PC-3 (cell line): ENCODE measurements at regions of chr1 and their contacts with region 1.

Region 1: GRCh38 chr1:229258031-229258756 is 12.7 kb upstream of the RAB4A start:
- DNase-seq: peak; percentile 85
- ATAC-seq: peak; percentile 87
- H3K4me3 ChIP-seq: no peak overlapping the region
- H3K27ac ChIP-seq: no peak overlapping the region
- H3K4me1 ChIP-seq: no peaks in the 10 kb centered on the region
- H3K27me3 ChIP-seq: no peaks in the 10 kb centered on the region
- CTCF ChIP-seq: peak; percentile 95

Region 2: DNA sequence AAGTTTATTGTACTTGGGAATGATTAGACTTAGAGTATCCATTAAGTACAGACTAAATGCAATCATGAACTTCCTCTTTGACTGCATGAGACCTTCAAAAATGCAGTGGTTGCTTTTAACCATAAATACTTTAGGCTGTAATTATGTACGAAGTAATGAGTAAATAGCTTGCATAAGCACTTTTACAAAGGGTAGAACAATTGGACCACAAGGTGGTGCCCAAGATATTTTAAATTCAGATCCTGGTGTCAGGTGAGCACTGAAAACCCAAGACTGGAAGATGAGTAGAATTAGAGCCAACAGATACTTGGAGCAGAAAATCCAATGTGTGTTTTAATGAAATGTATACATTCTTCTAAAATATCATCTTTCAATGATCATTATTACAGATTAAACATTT is 566.3 kb before region 1 on chr1:
- CTCF ChIA-PET with region 1: interaction called, 3 read pairs
- POLR2A ChIA-PET with region 1: no interaction called
- intact Hi-C with region 1: loop called (anchors 1 kb)
- DNase-seq: peak; percentile 86
- ATAC-seq: peak; percentile 89
- H3K4me3 ChIP-seq: no peak overlapping the region
- H3K27ac ChIP-seq: no peak overlapping the region
- H3K4me1 ChIP-seq: no peaks in the 10 kb centered on the region
- H3K27me3 ChIP-seq: no peaks in the 10 kb centered on the region
- CTCF ChIP-seq: peak; percentile 88

Region 3: GRCh38 chr1:229341774-229342655 is 83.8 kb after region 1 on chr1:
- CTCF ChIA-PET with region 1: no interaction called
- POLR2A ChIA-PET with region 1: no interaction called
- intact Hi-C with region 1: loop called (anchors 1 kb)
- DNase-seq: peak; percentile 83
- ATAC-seq: peak; percentile 78
- H3K4me3 ChIP-seq: peak overlapping the region; percentile 96
- H3K27ac ChIP-seq: no peak overlapping the region
- H3K4me1 ChIP-seq: peaks cover 23% of the 10 kb centered on the region
- H3K27me3 ChIP-seq: no peaks in the 10 kb centered on the region
- CTCF ChIP-seq: no peak

Region 4: DNA sequence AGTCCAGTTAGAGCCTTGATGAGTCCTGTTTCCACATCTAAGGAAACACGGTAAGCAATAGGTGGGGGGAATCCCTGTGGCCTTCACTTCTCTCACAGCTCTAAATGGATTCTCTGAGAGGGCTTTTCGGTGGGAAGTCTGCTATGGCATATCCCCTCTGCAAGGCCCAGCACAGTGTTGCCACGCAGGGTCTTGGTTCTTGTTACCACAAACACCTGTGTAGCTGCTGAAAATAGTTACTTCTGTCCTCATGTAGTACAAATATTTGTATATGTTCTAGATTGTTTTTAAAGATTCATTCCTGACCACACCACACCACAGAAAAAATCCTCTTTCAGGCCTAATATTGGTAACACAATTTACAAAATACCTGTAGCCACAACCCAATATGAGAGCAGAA is 170.1 kb after region 1 on chr1:
- CTCF ChIA-PET with region 1: no interaction called
- POLR2A ChIA-PET with region 1: no interaction called
- intact Hi-C with region 1: no loop called
- DNase-seq: no peak
- ATAC-seq: no peak
- H3K4me3 ChIP-seq: no peak overlapping the region
- H3K27ac ChIP-seq: no peak overlapping the region
- H3K4me1 ChIP-seq: no peaks in the 10 kb centered on the region
- H3K27me3 ChIP-seq: peaks cover 22% of the 10 kb centered on the region
- CTCF ChIP-seq: no peak

Region 5: GRCh38 chr1:229482511-229482910 is 224.3 kb after region 1 on chr1:
- CTCF ChIA-PET with region 1: interaction called, 4 read pairs
- POLR2A ChIA-PET with region 1: no interaction called
- intact Hi-C with region 1: loop called (anchors 1 kb)
- DNase-seq: no peak
- ATAC-seq: 0 out of 2 replicates have a peak, but pooled peaks have one; percentile 11
- H3K4me3 ChIP-seq: no peak overlapping the region
- H3K27ac ChIP-seq: no peak overlapping the region
- H3K4me1 ChIP-seq: no peaks in the 10 kb centered on the region
- H3K27me3 ChIP-seq: no peaks in the 10 kb centered on the region
- CTCF ChIP-seq: no peak

Region 6: GRCh38 chr1:231091831-231092301 is 1833.7 kb after region 1 on chr1:
- CTCF ChIA-PET with region 1: interaction called, 11 read pairs
- POLR2A ChIA-PET with region 1: no interaction called
- intact Hi-C with region 1: no loop called
- DNase-seq: peak; percentile 72
- ATAC-seq: peak; percentile 71
- H3K4me3 ChIP-seq: no peak overlapping the region
- H3K27ac ChIP-seq: no peak overlapping the region
- H3K4me1 ChIP-seq: no peaks in the 10 kb centered on the region
- H3K27me3 ChIP-seq: peaks cover 78% of the 10 kb centered on the region
- CTCF ChIP-seq: peak; percentile 88